Activated CD4-positive, alpha-beta T cell treated with anti-CD3 and anti-CD28 coated beads for 36 hours (primary cell): ENCODE measurements at regions of chr6 and their contacts with region 1.

Region 1: GRCh38 chr6:118735320-118735719 is 83.9 kb upstream of the CEP85L start:
- DNase-seq: no peak
- ATAC-seq: no peak
- H3K4me3 Mint-ChIP-seq: no peak overlapping the region
- H3K27ac Mint-ChIP-seq: peak overlapping the region; percentile 52
- H3K4me1 Mint-ChIP-seq: peaks cover 26% of the 10 kb centered on the region
- H3K27me3 Mint-ChIP-seq: no peaks in the 10 kb centered on the region

Region 2: DNA sequence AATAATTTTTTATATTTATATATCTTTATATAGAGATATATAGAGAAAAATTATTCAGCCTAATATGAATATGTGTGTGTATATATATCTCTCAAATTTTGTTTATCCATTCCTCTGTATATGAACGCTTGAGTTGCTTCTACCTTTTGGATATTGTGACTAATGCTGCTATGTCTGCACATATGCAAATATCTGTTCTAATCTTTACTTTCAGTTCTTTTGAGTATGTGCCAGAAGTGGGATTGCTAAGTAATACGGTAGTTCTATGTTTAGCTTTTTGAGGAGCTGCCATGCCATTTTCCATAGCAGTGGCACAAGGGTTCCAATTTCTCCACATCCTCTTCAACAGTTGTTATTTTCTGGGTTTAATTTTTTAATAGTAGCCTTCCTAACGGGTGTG is 11.1 kb before region 1 on chr6:
- CTCF ChIA-PET with region 1: interaction called, 7 read pairs
- POLR2A ChIA-PET with region 1: no interaction called
- intact Hi-C with region 1: loop called in 1 of 2 experiments (anchors 1 kb)
- DNase-seq: no peak
- ATAC-seq: peak; percentile 37
- H3K4me3 Mint-ChIP-seq: no peak overlapping the region
- H3K27ac Mint-ChIP-seq: peak overlapping the region; percentile 70
- H3K4me1 Mint-ChIP-seq: peaks cover 75% of the 10 kb centered on the region
- H3K27me3 Mint-ChIP-seq: no peaks in the 10 kb centered on the region

Region 3: GRCh38 chr6:118748311-118749062 is 13.2 kb after region 1 on chr6:
- CTCF ChIA-PET with region 1: interaction called, 3 read pairs
- POLR2A ChIA-PET with region 1: no interaction called
- intact Hi-C with region 1: loop called in 1 of 2 experiments (anchors 1 kb)
- DNase-seq: no peak
- ATAC-seq: peak; percentile 42
- H3K4me3 Mint-ChIP-seq: no peak overlapping the region
- H3K27ac Mint-ChIP-seq: no peak overlapping the region
- H3K4me1 Mint-ChIP-seq: peaks cover 23% of the 10 kb centered on the region
- H3K27me3 Mint-ChIP-seq: no peaks in the 10 kb centered on the region